Activated T-helper 2 cell treated with anti-CD3 and anti-CD28 coated beads, Interferon-gamma antibody, Interleukin-2, Interleukin-4, amounts not matched to agents 10 μg/mL and 5 μg/mL and 100 μg/mL, durations not matched to agents 14 hours and 24 hours and 36 hours (primary cell): ENCODE measurements at regions of chr5 and their contacts with region 1.

Region 1: GRCh38 chr5:80125962-80126480 is 90.9 kb downstream of the THBS4 start:
- DNase-seq: no peak
- H3K4me3 Mint-ChIP-seq: peak overlapping the region; percentile 28
- H3K27ac Mint-ChIP-seq: peak overlapping the region; percentile 86
- H3K4me1 Mint-ChIP-seq: peaks cover 45% of the 10 kb centered on the region
- H3K27me3 Mint-ChIP-seq: no peaks in the 10 kb centered on the region

Region 2: DNA sequence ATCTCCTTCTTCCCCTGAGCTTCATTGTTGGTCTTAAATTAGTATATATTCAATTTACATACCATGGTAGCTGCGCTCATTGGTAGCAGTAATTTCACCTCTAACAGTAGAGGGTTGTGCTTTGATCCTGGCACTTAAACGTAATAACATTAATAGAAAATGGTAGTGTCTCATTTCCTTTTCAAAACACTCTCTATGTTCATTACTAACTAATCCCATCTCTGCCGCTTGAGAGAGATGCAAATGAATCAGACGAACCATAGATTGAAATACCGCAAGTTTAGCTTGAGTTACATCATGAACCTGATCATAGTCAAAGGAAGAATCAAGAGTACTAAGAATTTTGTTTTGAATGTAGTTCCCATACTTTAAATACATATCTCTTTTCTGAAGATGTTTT is 88.7 kb before region 1 on chr5:
- intact Hi-C with region 1: loop called (anchors 1 kb)
- DNase-seq: no peak
- H3K4me3 Mint-ChIP-seq: peak overlapping the region; percentile 45
- H3K27ac Mint-ChIP-seq: no peak overlapping the region
- H3K4me1 Mint-ChIP-seq: peaks cover 30% of the 10 kb centered on the region
- H3K27me3 Mint-ChIP-seq: peaks cover 38% of the 10 kb centered on the region

Region 3: DNA sequence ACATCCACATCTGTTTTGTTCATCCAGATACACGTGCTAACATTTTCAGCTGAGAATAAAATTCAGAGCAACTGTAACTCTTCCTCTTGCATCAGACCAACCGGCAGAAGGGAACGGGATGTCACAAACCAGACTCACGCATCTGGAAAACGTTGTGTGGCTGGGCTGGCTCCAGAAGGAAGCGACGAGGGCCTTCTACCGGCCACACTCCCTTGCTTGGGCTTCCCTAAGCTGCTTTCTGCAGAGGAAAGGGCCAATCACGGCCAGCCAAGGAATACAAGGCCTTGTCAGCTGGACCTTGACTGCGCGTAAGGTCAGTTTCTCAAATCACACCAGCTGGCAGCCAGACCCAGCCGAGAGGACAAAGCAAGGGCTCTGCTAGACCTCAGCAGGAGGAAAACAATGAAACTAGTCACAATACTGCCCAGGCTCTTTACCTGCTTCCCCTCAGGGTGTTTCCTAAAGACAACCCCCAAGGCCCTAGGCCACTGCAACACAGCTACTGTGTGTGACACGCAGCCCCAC is 15.2 kb after region 1 on chr5:
- intact Hi-C with region 1: loop called (anchors 1 kb)
- DNase-seq: no peak
- H3K4me3 Mint-ChIP-seq: no peak overlapping the region
- H3K27ac Mint-ChIP-seq: peak overlapping the region; percentile 81
- H3K4me1 Mint-ChIP-seq: peaks cover 53% of the 10 kb centered on the region
- H3K27me3 Mint-ChIP-seq: no peaks in the 10 kb centered on the region

Region 4: GRCh38 chr5:80191991-80192398 is 66.0 kb after region 1 on chr5:
- intact Hi-C with region 1: loop called (anchors 1 kb)
- DNase-seq: peak; percentile 53
- H3K4me3 Mint-ChIP-seq: peak overlapping the region; percentile 75
- H3K27ac Mint-ChIP-seq: peak overlapping the region; percentile 97
- H3K4me1 Mint-ChIP-seq: peaks cover 78% of the 10 kb centered on the region
- H3K27me3 Mint-ChIP-seq: no peaks in the 10 kb centered on the region

Region 5: GRCh38 chr5:80268916-80269315 is 142.9 kb after region 1 on chr5:
- intact Hi-C with region 1: loop called (anchors 1 kb)
- DNase-seq: no peak
- H3K4me3 Mint-ChIP-seq: peak overlapping the region; percentile 26
- H3K27ac Mint-ChIP-seq: peak overlapping the region; percentile 89
- H3K4me1 Mint-ChIP-seq: peaks cover 27% of the 10 kb centered on the region
- H3K27me3 Mint-ChIP-seq: no peaks in the 10 kb centered on the region